Dorsolateral prefrontal cortex (tissue), 120 donors: ENCODE measurements at regions of chr9 and their contacts with region 1.

Region 1: GRCh38 chr9:4939118-4939561 is 45.9 kb upstream of the JAK2 start:
- DNase-seq: no peak
- H3K4me3 ChIP-seq: no peak overlapping the region
- H3K27ac ChIP-seq: peak overlapping the region in 2 of 59 donors; percentile 3 to 9
- H3K27me3 ChIP-seq: no peaks in the 10 kb centered on the region
- CTCF ChIP-seq: no peak

Region 2: GRCh38 chr9:4894076-4894475 is 45.1 kb before region 1 on chr9:
- intact Hi-C with region 1: loop called in 1 of 2 experiments (anchors 5 kb)
- DNase-seq: no peak
- H3K4me3 ChIP-seq: no peak overlapping the region
- H3K27ac ChIP-seq: no peak overlapping the region
- H3K27me3 ChIP-seq: no peaks in the 10 kb centered on the region
- CTCF ChIP-seq: no peak